PC-3 (cell line): ENCODE measurements at regions of chr3 and their contacts with region 1.

Region 1: DNA sequence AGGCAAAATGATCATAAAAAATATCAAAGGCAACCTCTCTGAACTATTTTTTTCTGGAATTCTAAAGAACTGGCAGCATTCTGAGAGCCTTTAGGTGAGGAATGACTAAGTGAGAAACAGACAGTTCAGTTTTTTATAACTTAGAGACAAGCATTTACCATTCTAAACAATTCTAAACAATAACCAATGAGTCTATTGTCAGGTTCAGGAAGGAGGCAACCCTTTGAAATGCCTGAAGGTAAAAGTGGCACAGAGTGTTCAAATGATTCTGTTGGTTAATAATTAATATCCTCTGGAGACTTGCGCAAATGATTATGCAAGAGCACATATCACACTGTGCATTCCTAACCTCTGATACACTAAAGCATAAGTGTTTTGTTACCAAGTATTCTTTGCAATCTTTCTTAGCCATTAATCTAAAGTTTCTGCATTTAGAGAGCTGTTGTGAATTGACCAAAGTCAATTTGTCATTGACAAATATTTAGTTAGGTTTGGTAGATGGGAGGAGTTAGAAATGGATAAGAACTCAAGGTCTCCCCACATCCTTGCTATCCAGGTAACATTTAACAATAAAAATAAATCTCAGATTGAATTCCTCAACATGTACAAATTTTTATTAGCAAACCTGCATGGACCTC is 9.2 kb upstream of the TGFBR2 start:
- DNase-seq: peak; percentile 98
- ATAC-seq: peak; percentile 85
- H3K4me3 ChIP-seq: peak overlapping the region; percentile 18; the same call in 1 of the 2 replicates
- H3K27ac ChIP-seq: peak overlapping the region; percentile 88
- H3K4me1 ChIP-seq: peaks cover 35% of the 10 kb centered on the region
- H3K27me3 ChIP-seq: no peaks in the 10 kb centered on the region
- CTCF ChIP-seq: no peak

Region 2: DNA sequence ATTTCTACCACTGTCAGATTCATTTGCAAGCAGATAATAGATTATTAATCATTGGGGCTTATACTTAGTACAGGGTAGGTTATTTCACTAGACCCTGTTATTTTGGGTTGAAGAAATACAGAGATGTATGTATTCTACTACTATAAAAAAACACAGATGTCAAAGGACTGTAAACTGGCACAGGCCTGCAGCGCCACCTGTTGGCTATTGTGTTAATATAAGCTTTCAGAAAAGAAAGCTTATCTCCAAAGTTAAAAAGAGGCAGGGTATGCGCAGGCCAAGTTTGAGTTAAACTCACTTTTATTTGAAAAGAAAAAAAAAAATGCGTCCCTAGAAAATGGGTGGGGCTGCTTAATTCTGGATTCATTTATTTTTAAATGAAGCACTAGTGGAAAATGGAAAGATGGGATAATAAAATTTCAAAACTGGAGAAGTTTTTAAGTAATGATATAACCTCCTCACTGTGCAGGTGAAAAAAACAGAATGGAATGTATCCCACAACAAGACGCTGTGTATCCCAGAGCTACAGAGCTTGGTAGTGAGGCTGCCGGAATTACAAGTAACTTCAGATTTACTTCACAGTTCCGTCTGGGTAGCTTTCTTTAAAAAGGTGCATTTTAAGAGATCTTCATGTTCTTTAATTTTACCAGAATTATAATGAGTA is 398.0 kb before region 1 on chr3:
- CTCF ChIA-PET with region 1: no interaction called
- POLR2A ChIA-PET with region 1: no interaction called
- intact Hi-C with region 1: loop called (anchors 2 kb)
- DNase-seq: peak; percentile 77
- ATAC-seq: peak; percentile 59
- H3K4me3 ChIP-seq: no peak overlapping the region
- H3K27ac ChIP-seq: no peak overlapping the region
- H3K4me1 ChIP-seq: no peaks in the 10 kb centered on the region
- H3K27me3 ChIP-seq: no peaks in the 10 kb centered on the region
- CTCF ChIP-seq: peak; percentile 93

Region 3: GRCh38 chr3:30347679-30348216 is 249.5 kb before region 1 on chr3:
- CTCF ChIA-PET with region 1: no interaction called
- POLR2A ChIA-PET with region 1: no interaction called
- intact Hi-C with region 1: loop called (anchors 1 kb)
- DNase-seq: peak; percentile 96
- ATAC-seq: peak; percentile 67
- H3K4me3 ChIP-seq: peak overlapping the region; percentile 10; the same call in 1 of the 2 replicates
- H3K27ac ChIP-seq: peak overlapping the region; percentile 98
- H3K4me1 ChIP-seq: peaks cover 89% of the 10 kb centered on the region
- H3K27me3 ChIP-seq: no peaks in the 10 kb centered on the region
- CTCF ChIP-seq: no peak

Region 4: DNA sequence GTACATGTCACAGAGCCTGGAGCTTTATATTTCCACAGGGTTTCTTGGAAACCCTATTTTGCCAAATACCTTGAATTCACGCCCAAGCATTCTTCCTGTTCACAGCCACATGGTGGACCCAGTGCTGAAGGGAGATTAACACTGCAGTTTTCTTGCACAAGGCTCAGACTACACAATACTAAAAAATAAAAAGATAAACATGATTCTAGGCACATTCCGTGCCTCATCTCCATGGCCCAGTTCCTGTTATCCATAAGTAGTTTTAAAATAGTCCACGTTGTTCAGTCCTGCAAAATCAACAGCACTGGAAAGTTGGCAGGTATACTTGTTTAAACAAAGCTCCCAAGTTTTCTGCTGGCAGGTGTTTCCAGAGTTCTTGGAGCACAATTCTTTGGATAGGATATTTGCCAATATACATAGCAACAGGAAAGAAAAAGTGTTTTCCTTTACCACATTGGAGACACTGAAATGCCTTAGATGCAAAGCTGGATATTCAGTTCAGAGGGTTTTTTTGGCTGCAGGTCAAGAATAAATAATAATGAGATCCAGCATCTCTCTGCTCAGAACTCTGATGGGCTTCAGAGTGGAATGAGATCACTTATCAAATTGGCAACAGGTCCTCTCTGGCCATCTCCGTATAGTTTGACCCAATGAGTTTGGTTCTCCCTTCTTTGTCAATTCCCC is 78.9 kb before region 1 on chr3:
- CTCF ChIA-PET with region 1: no interaction called
- POLR2A ChIA-PET with region 1: interaction called, 3 read pairs
- intact Hi-C with region 1: loop called (anchors 1 kb)
- DNase-seq: peak; percentile 74
- ATAC-seq: peak; percentile 68
- H3K4me3 ChIP-seq: no peak overlapping the region
- H3K27ac ChIP-seq: peak overlapping the region; percentile 16; the same call in 1 of the 2 replicates
- H3K4me1 ChIP-seq: peaks cover 28% of the 10 kb centered on the region
- H3K27me3 ChIP-seq: no peaks in the 10 kb centered on the region
- CTCF ChIP-seq: no peak

Region 5: GRCh38 chr3:30578479-30578878 is 18.8 kb before region 1 on chr3:
- CTCF ChIA-PET with region 1: no interaction called
- POLR2A ChIA-PET with region 1: no interaction called
- intact Hi-C with region 1: loop called (anchors 2 kb)
- DNase-seq: peak; percentile 94
- ATAC-seq: peak; percentile 91
- H3K4me3 ChIP-seq: no peak overlapping the region
- H3K27ac ChIP-seq: peak overlapping the region; percentile 83
- H3K4me1 ChIP-seq: peaks cover 22% of the 10 kb centered on the region
- H3K27me3 ChIP-seq: no peaks in the 10 kb centered on the region
- CTCF ChIP-seq: no peak